Left ventricle myocardium superior (tissue), 1 donor: ENCODE measurements at regions of chr10 and their contacts with region 1.

Region 1: DNA sequence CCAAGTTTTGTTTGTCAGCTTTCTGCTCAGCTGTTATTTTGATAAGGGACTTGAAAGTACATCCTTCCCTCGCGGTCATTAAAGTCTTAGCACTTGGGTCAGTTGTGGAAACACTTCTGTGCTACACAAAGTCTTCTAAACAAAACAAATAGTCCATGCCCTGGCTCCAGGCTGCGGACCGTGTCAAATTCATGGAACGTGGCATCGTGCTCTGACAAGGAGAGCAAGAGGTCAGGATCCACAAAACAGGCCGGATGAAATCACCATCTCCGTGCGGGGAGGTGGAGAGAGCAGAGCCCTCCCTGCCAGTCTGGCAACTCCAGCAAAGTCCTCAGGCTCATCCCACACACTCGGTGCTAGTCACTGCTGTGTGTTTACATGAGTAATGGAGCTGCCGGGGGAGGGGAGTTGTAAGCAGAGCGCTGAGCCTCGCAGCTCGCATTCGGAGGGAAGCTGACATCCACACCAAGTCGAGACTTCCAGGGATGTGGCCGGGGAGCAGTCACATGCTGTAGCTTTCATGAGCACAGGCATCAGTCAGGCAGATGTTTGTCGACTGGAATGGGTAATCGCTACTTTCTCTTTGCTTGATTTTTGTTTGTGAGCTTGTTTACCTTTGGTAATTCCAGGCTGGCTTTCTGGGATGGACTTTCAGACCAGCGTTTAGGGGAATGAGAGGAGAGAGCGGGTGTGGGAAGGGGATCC is 147.6 kb downstream of the ARID5B start:
- DNase-seq: peak; percentile 85
- ATAC-seq: peak; percentile 87

Region 2: GRCh38 chr10:61896854-61897661 is 152.0 kb before region 1 on chr10:
- intact Hi-C with region 1: loop called (anchors 5 kb)
- DNase-seq: peak; percentile 70
- ATAC-seq: peak; percentile 82

Region 3: GRCh38 chr10:62000037-62000603 is 49.0 kb before region 1 on chr10:
- intact Hi-C with region 1: no loop called
- DNase-seq: no peak
- ATAC-seq: no peak

Region 4: GRCh38 chr10:62082729-62083411 is 33.8 kb after region 1 on chr10:
- intact Hi-C with region 1: loop called (anchors 5 kb)
- DNase-seq: no peak
- ATAC-seq: peak; percentile 56